Breast epithelium (tissue), 4 donors: ENCODE measurements at regions of chr2 and their contacts with region 1.

Region 1: DNA sequence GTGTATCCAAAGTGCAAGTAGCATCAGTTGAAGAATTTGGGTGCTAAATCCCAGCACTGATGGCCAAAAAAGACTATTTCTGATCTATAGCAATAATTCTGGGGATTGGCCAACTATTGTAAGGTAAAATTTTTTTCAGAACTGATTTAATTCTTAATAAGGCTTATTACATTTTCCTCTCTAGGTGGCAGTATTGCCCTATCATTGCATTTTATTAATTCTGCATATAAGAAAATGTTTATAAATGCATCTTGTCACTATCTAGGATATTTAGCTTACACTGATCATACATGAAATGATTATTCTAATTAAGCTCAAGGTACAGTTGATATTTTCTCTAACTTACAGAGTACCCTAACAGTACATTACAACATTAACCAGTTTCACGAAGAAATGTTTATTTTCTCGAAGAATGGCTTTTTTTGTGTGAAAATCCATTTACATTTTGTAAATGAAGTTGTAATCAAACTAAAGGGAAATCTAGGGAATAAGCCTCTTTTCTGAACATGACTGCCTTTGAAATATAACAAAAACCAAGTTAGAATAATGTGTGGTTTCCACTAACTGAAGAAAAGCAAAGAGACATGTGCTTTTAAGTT is 11.0 kb downstream of the TTN start:
- DNase-seq: no peak
- H3K4me3 ChIP-seq: no peak overlapping the region
- H3K27ac ChIP-seq: no peak overlapping the region
- H3K4me1 ChIP-seq: no peaks in the 10 kb centered on the region
- H3K27me3 ChIP-seq: no peaks in the 10 kb centered on the region
- CTCF ChIP-seq: peak in 2 of 3 donors; percentile 43 to 50
- POLR2A ChIP-seq: no peak

Region 2: GRCh38 chr2:177675350-177675821 is 1120.8 kb before region 1 on chr2:
- intact Hi-C with region 1: no loop called
- DNase-seq: no peak
- H3K4me3 ChIP-seq: no peak overlapping the region
- H3K27ac ChIP-seq: no peak overlapping the region
- H3K4me1 ChIP-seq: no peaks in the 10 kb centered on the region
- H3K27me3 ChIP-seq: no peaks in the 10 kb centered on the region
- CTCF ChIP-seq: no peak
- POLR2A ChIP-seq: no peak

Region 3: DNA sequence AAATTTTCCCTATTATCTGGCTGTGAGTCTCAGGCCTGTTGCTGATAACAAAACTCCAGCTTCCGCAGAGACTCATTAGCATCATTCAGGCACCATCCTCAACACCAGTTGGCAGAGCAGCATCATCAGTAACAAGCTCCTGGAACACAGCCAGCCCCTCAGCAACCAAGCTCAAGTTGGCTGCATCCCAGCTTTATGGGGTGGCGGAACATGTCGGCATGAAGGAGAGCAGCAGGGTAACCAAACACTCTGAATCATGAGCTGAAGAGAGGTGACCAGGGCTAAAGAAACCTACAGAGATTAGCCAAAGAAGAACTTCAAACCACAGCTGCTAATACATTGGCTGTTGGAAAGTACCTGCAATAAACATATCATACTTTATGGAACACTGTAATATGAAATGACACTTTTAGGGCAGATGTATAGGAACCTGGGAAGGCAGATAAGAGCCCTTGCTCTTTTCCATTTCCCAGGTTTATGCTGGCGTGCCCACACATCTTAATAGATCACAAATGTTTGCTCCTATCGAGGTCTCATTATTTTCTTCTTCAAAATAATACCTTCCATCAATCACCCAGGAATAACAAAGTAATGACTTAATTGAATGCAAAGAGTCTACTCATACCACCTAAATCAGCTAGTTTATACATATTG is 787.4 kb before region 1 on chr2:
- intact Hi-C with region 1: no loop called
- DNase-seq: no peak
- H3K4me3 ChIP-seq: no peak overlapping the region
- H3K27ac ChIP-seq: no peak overlapping the region
- H3K4me1 ChIP-seq: no peaks in the 10 kb centered on the region
- H3K27me3 ChIP-seq: no peaks in the 10 kb centered on the region
- CTCF ChIP-seq: no peak
- POLR2A ChIP-seq: no peak

Region 4: GRCh38 chr2:178268435-178268834 is 527.7 kb before region 1 on chr2:
- intact Hi-C with region 1: no loop called
- DNase-seq: no peak
- H3K4me3 ChIP-seq: no peak overlapping the region
- H3K27ac ChIP-seq: no peak overlapping the region
- H3K4me1 ChIP-seq: no peaks in the 10 kb centered on the region
- H3K27me3 ChIP-seq: no peaks in the 10 kb centered on the region
- CTCF ChIP-seq: no peak
- POLR2A ChIP-seq: no peak

Region 5: GRCh38 chr2:178363252-178363651 is 432.9 kb before region 1 on chr2:
- intact Hi-C with region 1: loop called (anchors 5 kb)
- DNase-seq: peak in 1 of 2 donors; percentile 22
- H3K4me3 ChIP-seq: no peak overlapping the region
- H3K27ac ChIP-seq: no peak overlapping the region
- H3K4me1 ChIP-seq: no peaks in the 10 kb centered on the region
- H3K27me3 ChIP-seq: no peaks in the 10 kb centered on the region
- CTCF ChIP-seq: no peak
- POLR2A ChIP-seq: no peak

Region 6: DNA sequence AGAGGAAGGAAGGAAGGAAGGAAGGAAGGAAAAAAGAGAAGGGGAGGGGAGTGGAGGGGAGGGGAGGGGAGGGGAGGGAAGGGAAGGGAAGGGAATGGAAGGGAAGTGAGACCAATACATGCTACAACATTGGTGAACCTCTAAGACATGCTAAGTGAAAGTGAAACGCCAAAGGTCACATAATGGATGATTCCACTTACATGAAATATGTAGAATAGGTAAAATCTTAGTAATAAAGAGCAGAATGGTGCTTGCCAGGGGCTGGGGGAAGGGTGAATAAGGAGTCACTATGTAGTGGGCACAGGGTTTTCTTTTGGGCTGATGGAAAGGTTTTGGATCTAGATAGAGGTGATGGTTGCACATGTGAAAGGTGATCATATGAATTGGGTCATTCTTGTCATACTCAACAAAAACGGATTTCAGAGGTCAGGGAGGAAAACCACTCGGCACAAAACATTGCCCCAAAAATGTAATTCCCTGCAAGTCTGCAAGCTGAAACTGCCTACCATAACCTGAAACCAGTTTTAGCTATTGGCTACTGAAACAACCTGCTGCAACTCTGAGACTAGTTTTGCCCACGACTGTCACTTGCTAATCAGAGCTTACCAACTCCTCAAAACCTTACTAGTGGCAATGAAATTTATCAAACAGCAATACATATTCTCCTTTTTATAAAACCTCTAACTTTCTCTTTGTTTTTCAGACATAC is 194.5 kb after region 1 on chr2:
- intact Hi-C with region 1: no loop called
- DNase-seq: no peak
- H3K4me3 ChIP-seq: no peak overlapping the region
- H3K27ac ChIP-seq: no peak overlapping the region
- H3K4me1 ChIP-seq: no peaks in the 10 kb centered on the region
- H3K27me3 ChIP-seq: no peaks in the 10 kb centered on the region
- CTCF ChIP-seq: no peak
- POLR2A ChIP-seq: no peak